ENCODE measurements at regions of chr13 and their contacts with region 1.

Region 1: DNA sequence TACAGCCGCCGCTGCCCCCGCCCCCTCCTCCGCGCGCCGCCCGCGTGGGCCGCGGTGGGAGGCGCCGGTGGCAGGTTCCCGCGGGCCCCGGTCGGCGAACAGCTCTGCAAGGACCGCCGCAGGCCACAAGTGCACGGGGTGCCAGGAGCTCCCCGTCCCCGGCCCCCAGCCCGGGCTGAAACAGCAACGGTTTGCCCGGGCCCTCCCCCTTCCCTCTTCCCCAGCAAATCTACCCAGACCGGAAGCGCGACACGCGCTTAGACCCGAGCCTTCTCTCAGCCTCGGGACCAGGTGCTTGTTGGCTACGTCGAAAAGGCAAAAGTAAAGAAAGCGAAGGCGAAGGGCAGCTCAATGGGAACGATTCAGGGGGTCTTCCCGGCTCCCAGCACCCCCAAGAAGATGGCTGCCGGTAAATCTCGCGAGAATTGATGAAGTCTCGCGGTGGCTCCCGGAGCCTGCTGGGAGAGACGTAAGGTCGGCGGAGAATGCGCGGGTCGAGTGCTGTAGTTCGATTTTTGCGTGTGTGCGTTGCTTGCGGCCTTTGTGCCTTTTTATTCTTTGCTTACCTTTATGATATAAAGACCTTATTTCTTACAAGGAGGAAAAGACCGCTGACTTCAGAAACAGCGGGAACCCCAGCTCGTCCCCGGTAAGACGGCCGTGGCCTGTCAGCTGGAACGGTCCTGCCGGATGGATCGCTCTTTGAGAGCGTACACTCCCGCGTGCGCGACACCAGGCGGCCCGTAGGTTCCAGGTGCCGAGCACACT is at the start of gene RBM26:
- DNase-seq: peak; percentile 98
- H3K4me3 Mint-ChIP-seq: no peak within 1 kb of the TSS
- H3K27ac Mint-ChIP-seq: peak within 1 kb of the TSS; percentile 98
- H3K4me1 Mint-ChIP-seq: peaks cover 37% of the 10 kb centered on the region
- H3K27me3 Mint-ChIP-seq: no peaks in the 10 kb centered on the region
- total RNA-seq, gene RBM26: 96.6 and 100 TPM in 2 replicates

Region 2: GRCh38 chr13:79393564-79394249 is 12.3 kb before region 1 on chr13:
- intact Hi-C with region 1: loop called (anchors 1 kb)
- DNase-seq: peak; percentile 78
- H3K4me3 Mint-ChIP-seq: peak overlapping the region; percentile 80
- H3K27ac Mint-ChIP-seq: peak overlapping the region; percentile 83
- H3K4me1 Mint-ChIP-seq: peaks cover 47% of the 10 kb centered on the region
- H3K27me3 Mint-ChIP-seq: no peaks in the 10 kb centered on the region

Region 3: DNA sequence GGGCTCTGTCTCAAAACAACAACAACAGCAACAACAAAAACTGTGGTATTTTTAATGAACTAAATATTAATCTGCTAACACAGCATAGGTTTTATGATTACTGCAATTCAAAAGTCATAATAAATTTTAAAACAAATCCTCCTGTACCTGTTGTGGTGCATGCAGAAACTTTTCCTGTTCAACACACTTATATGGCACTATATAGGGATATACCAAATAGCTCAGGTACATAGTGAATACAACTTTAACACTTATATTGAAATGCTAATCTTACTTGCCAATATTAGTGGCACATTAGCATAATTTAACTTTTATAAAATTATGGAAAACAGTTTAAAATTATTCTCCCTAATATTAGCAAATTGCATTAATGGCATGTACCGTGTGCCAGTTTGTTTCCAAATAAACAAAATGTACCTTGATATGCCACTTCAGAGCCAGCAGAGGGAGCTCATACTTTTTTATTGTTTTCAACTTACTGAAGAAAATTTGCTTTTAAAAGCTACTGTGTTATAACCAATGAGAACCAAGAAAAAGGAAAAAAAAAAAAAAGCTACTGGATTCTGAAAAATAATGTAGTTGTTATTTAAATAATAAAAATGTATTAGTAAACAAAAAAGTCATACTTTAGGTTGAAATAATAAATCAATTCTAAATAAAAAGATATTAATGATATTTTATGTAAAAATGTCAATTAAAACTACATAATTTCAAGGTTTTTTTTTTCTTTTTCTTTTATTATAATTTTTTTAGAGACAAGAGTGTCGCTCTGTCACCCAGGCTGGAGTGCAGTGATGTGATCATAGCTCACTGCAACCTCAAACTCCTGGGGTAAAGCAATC is 18.0 kb after region 1 on chr13:
- intact Hi-C with region 1: loop called (anchors 2 kb)
- DNase-seq: no peak
- H3K4me3 Mint-ChIP-seq: no peak overlapping the region
- H3K27ac Mint-ChIP-seq: no peak overlapping the region
- H3K4me1 Mint-ChIP-seq: peaks cover 19% of the 10 kb centered on the region
- H3K27me3 Mint-ChIP-seq: no peaks in the 10 kb centered on the region

Region 4: GRCh38 chr13:79451500-79451962 is 45.5 kb after region 1 on chr13:
- intact Hi-C with region 1: loop called (anchors 1 kb)
- DNase-seq: peak; percentile 96
- H3K4me3 Mint-ChIP-seq: peak overlapping the region; percentile 86
- H3K27ac Mint-ChIP-seq: peak overlapping the region; percentile 99
- H3K4me1 Mint-ChIP-seq: peaks cover 66% of the 10 kb centered on the region
- H3K27me3 Mint-ChIP-seq: no peaks in the 10 kb centered on the region

Region 5: DNA sequence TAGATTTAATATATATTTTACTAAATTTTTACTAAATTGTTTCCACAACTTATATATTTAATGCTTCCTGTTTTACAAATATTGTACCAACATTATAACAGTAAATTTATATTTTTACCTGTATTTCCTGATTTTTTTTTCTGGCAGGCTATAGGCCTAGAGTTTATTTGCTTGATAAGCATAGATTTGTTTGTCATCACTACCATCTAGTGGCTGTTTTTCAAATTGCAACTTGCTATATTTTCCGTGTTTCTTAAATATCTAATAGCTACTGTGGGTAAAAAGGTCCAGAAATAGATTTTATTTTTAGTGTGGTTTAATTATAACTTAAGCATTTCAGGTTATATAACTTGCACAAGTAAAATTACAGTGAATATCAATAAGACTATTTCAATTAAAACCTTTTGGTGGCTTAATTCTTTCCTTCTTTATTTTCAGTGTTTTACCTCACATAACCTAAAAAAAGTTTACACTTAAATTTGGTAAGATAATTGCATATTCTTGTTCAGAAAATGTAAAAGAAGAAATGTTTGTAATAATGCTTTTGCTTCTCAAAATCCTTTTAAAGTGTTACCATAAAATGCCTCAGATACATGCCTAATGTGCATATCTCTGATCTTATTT is 135.5 kb after region 1 on chr13:
- intact Hi-C with region 1: loop called (anchors 5 kb)
- DNase-seq: peak; percentile 77
- H3K4me3 Mint-ChIP-seq: no peak overlapping the region
- H3K27ac Mint-ChIP-seq: no peak overlapping the region
- H3K4me1 Mint-ChIP-seq: peaks cover 19% of the 10 kb centered on the region
- H3K27me3 Mint-ChIP-seq: no peaks in the 10 kb centered on the region

Measured in activated CD4-positive, alpha-beta T cell treated with anti-CD3 and anti-CD28 coated beads, Interleukin-2, amount 10 ng/mL, durations not matched to agents 24 days and 14 days (primary cell).